ENCODE measurements at regions of chr6 and their contacts with region 1.

Region 1: GRCh38 chr6:137717074-137718073 is 149.7 kb upstream of the TNFAIP3 start:
- DNase-seq: no peak
- ATAC-seq: peak; percentile 95
- H3K4me3 ChIP-seq: no peak overlapping the region
- H3K27ac ChIP-seq: no peak overlapping the region
- H3K4me1 ChIP-seq: peaks cover 8% of the 10 kb centered on the region
- H3K27me3 ChIP-seq: no peaks in the 10 kb centered on the region
- CTCF ChIP-seq: no peak
- EP300 ChIP-seq: no peak
- POLR2A ChIP-seq: no peak
- RAD21 ChIP-seq: no peak

Region 2: GRCh38 chr6:137416376-137417109 is 300.8 kb before region 1 on chr6:
- CTCF ChIA-PET with region 1: no interaction called
- POLR2A ChIA-PET with region 1: no interaction called
- RAD21 ChIA-PET with region 1: no interaction called
- SMC1A ChIA-PET with region 1: no interaction called
- in situ Hi-C with region 1: no loop called
- intact Hi-C with region 1: no loop called
- DNase-seq: no peak
- ATAC-seq: no peak
- H3K4me3 ChIP-seq: no peak overlapping the region
- H3K27ac ChIP-seq: no peak overlapping the region
- H3K4me1 ChIP-seq: peaks cover 4% of the 10 kb centered on the region
- H3K27me3 ChIP-seq: peaks cover 0 to 3% of the 10 kb centered on the region in 2 experiments; a peak in 1 of 4 replicates
- CTCF ChIP-seq: no peak
- EP300 ChIP-seq: no peak
- POLR2A ChIP-seq: no peak
- RAD21 ChIP-seq: no peak

Region 3: DNA sequence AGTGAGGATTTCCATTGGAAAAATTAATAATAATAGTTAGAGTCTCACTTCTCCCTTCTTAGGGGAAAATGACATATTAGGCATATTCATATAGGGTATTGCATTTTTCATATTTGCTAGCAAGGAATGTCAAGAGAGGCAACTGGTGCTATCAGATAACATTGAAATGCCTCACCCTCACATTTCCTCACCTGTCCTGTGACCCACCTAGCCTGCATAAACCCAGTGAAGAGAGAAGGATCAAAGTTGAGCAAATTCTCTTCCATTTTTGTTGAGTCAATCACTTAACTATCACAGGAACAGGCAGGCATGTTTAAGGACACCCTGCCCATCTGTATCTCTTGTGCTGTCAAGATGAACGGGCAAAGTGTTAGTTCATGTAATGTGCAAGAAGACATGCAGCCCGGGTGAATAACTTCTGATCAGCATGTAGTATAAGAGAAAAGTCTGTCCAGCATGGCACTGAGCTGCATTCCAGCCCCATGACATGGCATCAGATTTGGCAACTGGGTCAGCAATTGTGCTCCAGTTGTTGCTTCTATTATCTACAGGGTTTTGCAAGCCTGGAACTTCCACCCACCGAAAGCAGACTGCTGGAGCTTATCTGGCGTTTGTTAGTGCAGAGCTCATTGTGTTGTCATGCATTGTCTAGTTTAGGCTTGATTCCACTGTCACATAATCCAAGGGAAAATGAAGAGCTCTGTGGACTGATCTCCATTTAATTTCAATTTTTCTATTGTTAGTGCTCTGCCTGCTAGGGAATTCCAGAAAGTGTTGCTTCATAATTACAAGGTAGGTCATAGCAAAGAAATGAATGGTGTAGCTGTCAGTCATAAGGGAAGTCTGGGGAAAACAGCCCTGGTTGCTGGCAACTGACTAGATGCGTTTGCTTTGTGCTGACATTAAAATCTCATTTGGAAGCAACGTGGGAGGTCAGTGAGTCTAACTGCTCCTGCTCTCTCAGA is 11.3 kb after region 1 on chr6:
- CTCF ChIA-PET with region 1: interaction called, 8 read pairs
- POLR2A ChIA-PET with region 1: interaction called, 7 read pairs
- RAD21 ChIA-PET with region 1: interaction called, 3 read pairs
- SMC1A ChIA-PET with region 1: interaction called, 19 read pairs
- in situ Hi-C with region 1: no loop called
- intact Hi-C with region 1: no loop called
- DNase-seq: no peak
- ATAC-seq: no peak
- H3K4me3 ChIP-seq: no peak overlapping the region
- H3K27ac ChIP-seq: no peak overlapping the region
- H3K4me1 ChIP-seq: no peaks in the 10 kb centered on the region
- H3K27me3 ChIP-seq: no peaks in the 10 kb centered on the region
- CTCF ChIP-seq: no peak
- EP300 ChIP-seq: no peak
- POLR2A ChIP-seq: no peak
- RAD21 ChIP-seq: no peak

Measured in GM12878 (cell line).